PC-9 (cell line): ENCODE measurements at regions of chr12 and their contacts with region 1.

Region 1: DNA sequence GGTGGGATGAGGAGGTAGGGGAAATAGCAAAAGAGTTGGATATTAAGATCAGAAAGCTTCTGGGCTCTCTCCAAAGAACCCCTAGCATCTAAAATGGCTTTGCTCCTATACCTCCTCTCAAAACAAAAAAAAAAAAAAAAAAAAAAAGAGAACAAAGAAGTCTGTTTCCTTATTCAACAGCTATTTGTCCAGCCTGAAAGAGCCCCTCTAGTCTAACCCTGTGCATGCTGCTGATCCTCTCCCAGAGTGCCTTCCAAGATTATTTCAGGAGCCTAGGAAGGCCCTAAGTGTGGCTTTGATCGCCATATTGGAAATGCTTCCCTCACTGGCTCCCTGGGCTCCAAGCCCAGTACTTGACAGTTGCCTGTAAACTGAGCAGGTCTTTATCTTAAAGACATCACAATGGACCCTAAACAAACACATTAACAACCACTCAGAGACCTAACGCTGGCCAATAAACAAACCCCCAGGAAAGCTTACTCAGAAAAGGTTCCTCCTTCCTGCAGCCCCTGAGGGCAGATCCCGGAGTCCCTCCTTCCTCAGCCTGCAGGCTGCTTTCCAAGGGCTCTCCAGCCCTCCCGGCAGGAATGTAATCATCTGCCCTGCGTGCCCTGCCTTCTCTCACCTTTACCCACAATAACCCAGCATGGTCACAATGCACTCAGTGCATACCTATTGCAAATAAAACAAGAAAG is 17.4 kb upstream of the COL2A1 start:
- DNase-seq: peak; percentile 92 to 98
- H3K4me3 ChIP-seq: no peak overlapping the region
- H3K27ac ChIP-seq: no peak overlapping the region
- H3K4me1 ChIP-seq: peaks cover 35% of the 10 kb centered on the region
- H3K27me3 ChIP-seq: peaks cover 37% of the 10 kb centered on the region
- CTCF ChIP-seq: no peak

Region 2: DNA sequence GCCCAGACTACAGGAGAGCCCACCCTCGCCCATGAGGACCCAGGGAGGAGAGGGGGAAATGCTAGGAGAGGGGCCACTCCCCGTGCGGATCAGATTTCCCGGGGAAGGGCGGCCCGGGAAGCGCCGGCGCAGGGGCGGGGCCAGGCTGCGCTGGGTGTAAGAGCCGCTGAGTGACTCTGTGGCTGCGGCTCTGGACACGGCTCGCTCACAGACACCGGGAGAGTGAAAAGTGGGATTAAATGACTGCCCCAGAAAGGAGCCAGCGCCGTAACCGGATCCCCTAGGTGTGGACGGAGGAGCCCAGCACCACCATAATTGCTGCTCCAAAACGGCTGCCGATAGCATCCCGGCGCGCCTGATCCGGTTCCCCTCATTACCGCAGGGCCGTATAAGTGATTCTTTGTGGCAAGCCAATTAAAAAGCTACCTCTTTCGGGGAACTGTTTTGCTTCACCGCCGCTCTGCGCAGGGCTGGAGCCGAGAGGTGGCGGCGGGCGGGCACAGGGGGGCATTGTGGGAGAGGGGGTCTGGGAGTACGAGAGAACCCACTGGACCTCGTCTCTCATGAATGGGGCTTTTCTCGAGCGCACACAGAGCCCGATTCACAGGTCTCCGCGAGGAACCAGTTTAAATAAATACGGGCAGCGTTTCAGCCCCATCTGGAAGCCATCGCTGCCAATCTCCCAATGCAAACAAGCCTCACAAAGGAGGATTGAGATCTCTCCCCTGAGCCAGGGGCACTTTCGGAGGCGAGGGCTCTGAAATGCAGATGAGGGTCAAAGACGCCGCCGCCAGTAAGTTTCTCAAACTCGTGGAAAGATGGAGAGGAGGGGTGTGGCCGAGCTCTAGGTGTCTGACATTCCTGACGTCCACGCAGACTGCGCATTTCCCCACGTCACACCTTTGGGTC is 19.9 kb before region 1 on chr12:
- CTCF ChIA-PET with region 1: no interaction called
- POLR2A ChIA-PET with region 1: no interaction called
- intact Hi-C with region 1: loop called (anchors 1 kb)
- DNase-seq: peak in 1 of 2 experiments; percentile 41
- H3K4me3 ChIP-seq: peak overlapping the region; percentile 78
- H3K27ac ChIP-seq: peak overlapping the region; percentile 48; the same call in 1 of the 2 replicates
- H3K4me1 ChIP-seq: peaks cover 20% of the 10 kb centered on the region
- H3K27me3 ChIP-seq: peaks cover 57% of the 10 kb centered on the region
- CTCF ChIP-seq: no peak